Activated naive CD4-positive, alpha-beta T cell treated with anti-CD3 and anti-CD28 coated beads for 36 hours (primary cell): ENCODE measurements at regions of chr11 and their contacts with region 1.

Region 1: DNA sequence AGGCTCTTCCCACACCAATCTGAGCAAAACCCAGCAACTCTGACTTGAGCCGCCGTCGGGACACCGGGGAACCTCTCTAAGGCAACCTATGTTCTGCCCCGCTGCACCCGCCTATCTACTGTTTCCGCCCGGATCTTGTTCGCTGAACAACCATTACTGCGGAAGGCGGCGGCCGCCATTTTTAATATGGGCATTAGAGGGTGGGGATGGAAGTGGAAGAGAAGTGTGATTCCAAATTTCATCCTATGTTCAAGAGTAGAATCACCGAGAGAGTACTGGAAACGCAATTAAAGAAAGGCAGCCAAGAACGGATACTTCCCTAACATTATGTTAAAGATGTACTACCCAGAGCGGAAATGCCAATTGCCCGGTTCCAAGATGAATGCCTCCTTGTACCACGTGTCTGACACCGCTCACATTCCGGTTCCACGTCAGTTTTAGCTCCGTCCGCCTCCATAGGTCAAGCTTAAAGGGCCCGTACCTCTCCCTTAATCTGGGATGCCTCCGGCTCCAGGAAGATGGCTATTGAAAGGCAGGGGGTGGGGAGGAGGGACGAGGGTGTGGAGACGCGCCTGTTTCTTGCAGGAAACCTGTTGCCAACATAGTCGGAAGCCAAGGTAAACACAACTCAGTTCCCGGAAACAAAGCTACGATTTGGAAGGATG is at the start of gene DPAGT1:
- DNase-seq: peak; percentile 92
- H3K4me3 Mint-ChIP-seq: peak within 1 kb of the TSS; percentile 94
- H3K27ac Mint-ChIP-seq: peak within 1 kb of the TSS; percentile 95
- H3K4me1 Mint-ChIP-seq: peaks cover 35% of the 10 kb centered on the region
- H3K27me3 Mint-ChIP-seq: no peaks in the 10 kb centered on the region
- total RNA-seq, gene DPAGT1: 52.2 to 53.1 TPM

Region 2: DNA sequence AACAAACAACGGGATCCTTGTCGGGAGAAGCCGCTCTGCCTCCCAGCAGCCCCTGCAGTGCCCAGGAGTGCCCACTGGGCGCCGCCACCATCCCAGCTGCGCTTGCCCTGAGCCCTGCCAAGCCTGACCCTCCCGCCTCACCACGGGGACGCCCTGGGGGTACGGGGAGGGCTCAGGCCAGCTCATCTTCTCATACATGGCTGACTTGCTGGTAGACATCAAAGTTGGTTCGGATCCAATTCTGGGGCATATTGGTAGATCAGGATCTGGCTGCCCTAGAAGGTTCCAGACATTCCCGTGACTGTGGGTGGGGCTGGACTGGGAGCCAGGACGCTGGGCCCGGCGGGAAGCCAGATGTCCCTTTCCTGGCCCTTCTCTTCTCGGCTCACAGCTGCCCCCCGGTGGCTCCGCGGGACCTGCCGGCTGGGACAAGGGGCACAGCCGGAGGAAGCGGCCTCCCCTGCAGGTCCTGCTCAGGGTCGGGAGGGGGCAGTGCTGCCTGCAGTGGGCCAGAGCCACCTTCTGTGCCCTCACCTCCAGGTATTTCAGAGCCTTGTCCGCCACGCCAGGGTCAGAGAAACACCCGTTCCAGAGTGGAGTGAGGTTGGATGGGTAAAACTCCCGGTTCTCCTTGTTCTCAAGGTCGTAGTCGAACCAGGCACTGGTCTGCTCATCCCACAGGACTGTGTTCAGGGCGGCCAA is 411.9 kb before region 1 on chr11:
- CTCF ChIA-PET with region 1: no interaction called
- intact Hi-C with region 1: loop called (anchors 5 kb)
- DNase-seq: peak; percentile 96
- H3K4me3 Mint-ChIP-seq: peak overlapping the region; percentile 77
- H3K27ac Mint-ChIP-seq: peak overlapping the region; percentile 82
- H3K4me1 Mint-ChIP-seq: peaks cover 46% of the 10 kb centered on the region
- H3K27me3 Mint-ChIP-seq: no peaks in the 10 kb centered on the region

Region 3: GRCh38 chr11:118988280-118988679 is 113.6 kb before region 1 on chr11:
- CTCF ChIA-PET with region 1: no interaction called
- intact Hi-C with region 1: no loop called
- DNase-seq: no peak
- H3K4me3 Mint-ChIP-seq: no peak overlapping the region
- H3K27ac Mint-ChIP-seq: no peak overlapping the region
- H3K4me1 Mint-ChIP-seq: no peaks in the 10 kb centered on the region
- H3K27me3 Mint-ChIP-seq: no peaks in the 10 kb centered on the region

Region 4: GRCh38 chr11:119024430-119025098 is 77.3 kb before region 1 on chr11:
- CTCF ChIA-PET with region 1: no interaction called
- intact Hi-C with region 1: no loop called
- DNase-seq: no peak
- H3K4me3 Mint-ChIP-seq: no peak overlapping the region
- H3K27ac Mint-ChIP-seq: peak overlapping the region; percentile 57
- H3K4me1 Mint-ChIP-seq: peaks cover 56% of the 10 kb centered on the region
- H3K27me3 Mint-ChIP-seq: no peaks in the 10 kb centered on the region

Region 5: DNA sequence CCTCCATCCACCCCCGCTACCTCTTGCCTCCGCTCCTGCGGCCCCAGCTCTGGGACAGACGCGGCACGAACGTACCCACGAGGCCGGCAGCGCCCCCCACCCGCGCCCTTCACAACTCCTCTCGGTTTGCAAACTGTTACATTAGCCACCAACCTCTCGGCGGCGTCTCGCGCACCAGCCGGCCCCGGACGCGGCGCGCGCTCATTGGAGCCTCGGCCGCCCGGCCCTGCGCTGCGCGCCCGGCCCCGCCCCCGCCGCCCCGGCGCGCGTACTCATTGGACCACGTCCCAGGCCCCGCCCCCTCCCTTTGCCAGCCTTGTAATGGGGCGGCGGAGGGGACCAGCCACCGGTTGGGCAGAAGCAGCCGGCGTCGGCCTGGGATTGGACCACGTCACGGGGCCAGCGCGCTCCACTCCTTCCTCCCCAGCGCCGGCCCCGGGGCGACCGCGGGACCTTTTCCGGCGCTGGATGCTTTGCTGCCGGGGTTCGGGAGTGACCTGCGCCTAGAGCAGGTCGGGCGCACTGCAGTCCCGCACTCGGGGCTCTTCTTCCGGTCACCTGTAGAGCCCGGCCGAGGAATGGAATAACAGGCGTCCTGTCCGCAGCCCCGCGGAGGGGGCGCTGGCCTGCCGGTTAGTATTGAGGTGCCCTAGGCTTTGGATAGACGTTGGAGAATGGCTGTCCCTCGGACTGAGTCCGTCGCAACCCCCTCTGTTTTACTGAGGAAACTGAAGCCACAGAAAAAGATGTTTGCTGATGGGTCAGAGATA is 44.7 kb before region 1 on chr11 and contains the start of gene HYOU1:
- CTCF ChIA-PET with region 1: interaction called, 4 read pairs
- intact Hi-C with region 1: loop called (anchors 1 kb)
- DNase-seq: peak; percentile 99
- H3K4me3 Mint-ChIP-seq: peak within 1 kb of the TSS; percentile 98
- H3K27ac Mint-ChIP-seq: peak within 1 kb of the TSS; percentile 95
- H3K4me1 Mint-ChIP-seq: peaks cover 53% of the 10 kb centered on the region
- H3K27me3 Mint-ChIP-seq: no peaks in the 10 kb centered on the region
- total RNA-seq, gene HYOU1: 108 to 116 TPM

Region 6: GRCh38 chr11:119084663-119085436 is 17.0 kb before region 1 on chr11 and contains the start of gene HMBS:
- CTCF ChIA-PET with region 1: interaction called, 8 read pairs
- intact Hi-C with region 1: loop called (anchors 1 kb)
- DNase-seq: peak; percentile 94
- H3K4me3 Mint-ChIP-seq: peak within 1 kb of the TSS; percentile 98
- H3K27ac Mint-ChIP-seq: peak within 1 kb of the TSS; percentile 96
- H3K4me1 Mint-ChIP-seq: peaks cover 21% of the 10 kb centered on the region
- H3K27me3 Mint-ChIP-seq: no peaks in the 10 kb centered on the region
- total RNA-seq, gene HMBS: 27.9 to 29.4 TPM

Region 7: DNA sequence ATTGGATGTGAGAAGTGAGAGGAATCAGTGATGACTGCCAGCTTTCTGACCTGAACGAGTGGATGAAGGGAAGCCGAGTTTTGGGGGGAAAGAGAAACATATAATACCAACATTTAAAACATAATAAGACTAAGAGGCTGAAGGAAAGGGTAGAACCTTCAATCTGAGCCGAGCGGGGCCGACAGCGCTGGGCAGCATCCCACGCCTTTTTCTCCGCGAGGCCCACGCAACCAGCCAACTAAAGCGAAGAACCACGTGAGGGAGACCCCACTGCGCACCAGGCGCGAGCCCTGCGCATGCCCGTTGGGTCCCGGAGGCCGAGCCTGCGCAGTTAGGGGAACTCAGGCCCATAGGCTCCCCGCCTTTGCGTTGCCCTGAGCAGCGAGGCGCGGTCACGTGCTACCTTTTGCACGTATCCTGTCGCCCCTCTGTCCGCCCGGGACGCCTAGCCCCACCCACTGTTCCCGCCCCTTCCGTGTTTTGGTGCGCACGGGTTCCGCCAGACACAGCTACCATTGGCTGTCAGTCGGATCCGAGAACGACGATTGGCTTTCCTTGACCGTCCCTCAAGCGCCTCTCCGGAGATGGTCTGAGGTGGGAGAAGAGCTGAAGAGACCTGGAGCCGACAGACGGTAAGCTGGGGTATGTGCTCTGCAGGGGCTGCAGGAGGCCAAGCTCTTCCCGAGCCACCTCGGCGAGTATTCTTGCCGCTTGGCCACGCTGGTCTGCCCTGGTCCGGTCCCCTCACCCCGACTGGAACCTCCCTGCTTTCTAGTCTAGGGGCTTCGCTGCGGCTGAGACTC is 19.3 kb after region 1 on chr11 and contains the start of gene HINFP:
- CTCF ChIA-PET with region 1: interaction called, 4 read pairs
- intact Hi-C with region 1: loop called (anchors 1 kb)
- DNase-seq: peak; percentile 100
- H3K4me3 Mint-ChIP-seq: peak within 1 kb of the TSS; percentile 97
- H3K27ac Mint-ChIP-seq: peak within 1 kb of the TSS; percentile 80
- H3K4me1 Mint-ChIP-seq: peaks cover 27% of the 10 kb centered on the region
- H3K27me3 Mint-ChIP-seq: no peaks in the 10 kb centered on the region
- total RNA-seq, gene HINFP: 24.5 to 25.2 TPM

Region 8: GRCh38 chr11:119175493-119176077 is 73.7 kb after region 1 on chr11:
- CTCF ChIA-PET with region 1: no interaction called
- intact Hi-C with region 1: no loop called
- DNase-seq: no peak
- H3K4me3 Mint-ChIP-seq: no peak overlapping the region
- H3K27ac Mint-ChIP-seq: no peak overlapping the region
- H3K4me1 Mint-ChIP-seq: peaks cover 17% of the 10 kb centered on the region
- H3K27me3 Mint-ChIP-seq: no peaks in the 10 kb centered on the region

Region 9: DNA sequence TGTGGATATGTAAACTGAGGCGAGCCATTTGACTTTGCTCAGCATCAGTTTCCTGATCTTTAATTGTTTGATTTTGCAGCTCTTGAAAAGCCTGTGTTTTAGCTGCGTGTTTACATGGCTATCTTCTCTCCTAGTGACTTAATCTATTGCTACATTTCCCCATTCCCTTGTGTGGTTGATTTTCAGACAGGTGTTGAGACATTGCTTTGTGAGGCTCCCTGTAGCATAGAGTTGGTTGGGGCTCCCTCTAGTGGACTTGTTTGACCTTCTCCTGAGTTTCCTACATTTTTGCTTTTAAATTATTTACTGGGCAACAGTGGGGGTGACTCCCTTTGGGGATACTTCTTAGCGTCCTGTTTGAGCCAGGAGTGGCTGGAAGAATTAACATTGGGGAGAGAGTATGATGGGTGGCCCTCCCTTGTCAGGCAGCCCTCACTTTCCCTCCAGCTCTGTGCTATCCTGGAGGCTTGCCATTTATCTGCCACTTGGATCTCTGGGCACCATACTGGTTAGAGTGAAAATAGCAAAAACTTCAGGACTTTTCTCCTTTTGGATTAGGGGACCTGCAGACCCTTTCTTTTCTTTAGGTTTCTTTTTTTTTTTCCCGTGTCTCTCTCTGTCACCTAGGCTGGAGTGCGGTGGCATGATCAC is 95.1 kb after region 1 on chr11:
- CTCF ChIA-PET with region 1: interaction called, 5 read pairs
- intact Hi-C with region 1: loop called (anchors 2 kb)
- DNase-seq: peak; percentile 88
- H3K4me3 Mint-ChIP-seq: no peak overlapping the region
- H3K27ac Mint-ChIP-seq: no peak overlapping the region
- H3K4me1 Mint-ChIP-seq: no peaks in the 10 kb centered on the region
- H3K27me3 Mint-ChIP-seq: no peaks in the 10 kb centered on the region

Region 10: GRCh38 chr11:119323538-119324033 is 221.7 kb after region 1 on chr11:
- CTCF ChIA-PET with region 1: interaction called, 3 read pairs
- intact Hi-C with region 1: loop called (anchors 2 kb)
- DNase-seq: peak; percentile 94
- H3K4me3 Mint-ChIP-seq: no peak overlapping the region
- H3K27ac Mint-ChIP-seq: no peak overlapping the region
- H3K4me1 Mint-ChIP-seq: peaks cover 18% of the 10 kb centered on the region
- H3K27me3 Mint-ChIP-seq: peaks cover 6% of the 10 kb centered on the region